ENCODE measurements at regions of chr4 and their contacts with region 1.

Region 1: DNA sequence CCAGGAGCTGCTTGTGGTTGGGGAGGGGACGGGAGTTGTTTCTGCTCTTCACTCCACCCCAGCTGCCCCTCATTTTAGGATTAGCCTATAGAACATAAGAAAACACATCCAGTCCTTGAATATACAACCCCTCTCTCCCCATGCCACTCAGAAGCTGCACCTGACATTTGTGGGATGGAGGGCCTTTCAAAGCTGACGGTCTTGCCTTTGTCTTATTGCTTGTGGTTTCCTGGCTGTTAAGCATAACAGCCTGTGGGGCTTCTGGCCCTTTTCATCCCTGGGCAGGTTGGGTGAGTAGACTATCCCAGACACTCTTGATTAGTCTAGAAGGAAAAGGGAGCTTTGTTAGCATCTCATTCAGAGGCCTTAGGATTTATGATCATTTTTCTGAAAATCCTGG is 407.6 kb upstream of the BOD1L1 start:
- DNase-seq: no peak

Region 2: DNA sequence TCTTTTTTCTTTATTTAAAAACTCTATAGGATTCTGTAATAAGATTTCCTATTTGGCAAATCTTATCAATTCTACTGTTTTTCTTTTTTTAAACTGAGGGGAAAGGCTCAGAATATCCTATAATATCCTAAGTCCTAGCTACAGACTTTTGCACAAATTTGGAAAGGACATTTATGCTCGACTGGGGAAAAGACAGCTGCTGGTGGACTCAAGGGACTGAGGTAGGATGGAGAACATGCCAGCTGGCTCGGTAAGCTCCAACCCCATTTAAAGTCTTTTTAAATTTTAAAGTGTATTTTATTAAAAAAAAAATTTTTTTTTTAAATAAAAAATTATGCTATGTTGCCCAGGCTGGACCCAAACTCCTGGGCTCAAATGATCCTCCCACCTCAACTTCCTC is 444.3 kb before region 1 on chr4:
- intact Hi-C with region 1: loop called in 1 of 2 experiments (anchors 5 kb)
- DNase-seq: no peak